Left colon (tissue), 2 donors: ENCODE measurements at regions of chr14 and their contacts with region 1.

Region 1: GRCh38 chr14:34722717-34723545 is 8.5 kb upstream of the CFL2 start:
- DNase-seq: peak in 1 of 2 donors; percentile 26
- ATAC-seq: peak; percentile 49

Region 2: GRCh38 chr14:34671716-34672115 is 51.2 kb before region 1 on chr14:
- intact Hi-C with region 1: loop called (anchors 2 to 10 kb)
- DNase-seq: no peak
- ATAC-seq: no peak

Region 3: DNA sequence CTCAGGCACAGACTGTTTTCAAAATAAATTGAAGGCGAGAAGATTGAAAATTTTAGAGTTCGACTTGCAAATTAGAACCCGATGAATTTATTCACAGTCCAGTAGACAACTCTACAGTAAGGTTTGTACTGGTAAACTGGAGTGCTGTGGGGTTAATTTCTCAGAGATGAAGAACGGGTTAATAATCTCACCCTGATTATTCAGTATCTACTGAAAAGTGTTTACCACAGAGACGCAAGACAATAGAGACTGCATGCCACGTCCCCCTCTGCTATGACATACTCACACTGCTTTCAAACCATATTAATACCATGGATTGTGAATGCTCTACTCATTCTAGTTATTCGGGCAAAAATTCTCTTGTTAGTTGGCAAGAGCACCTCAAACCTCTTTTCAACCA is 44.6 kb before region 1 on chr14:
- intact Hi-C with region 1: loop called (anchors 2 to 10 kb)
- DNase-seq: no peak
- ATAC-seq: no peak

Region 4: DNA sequence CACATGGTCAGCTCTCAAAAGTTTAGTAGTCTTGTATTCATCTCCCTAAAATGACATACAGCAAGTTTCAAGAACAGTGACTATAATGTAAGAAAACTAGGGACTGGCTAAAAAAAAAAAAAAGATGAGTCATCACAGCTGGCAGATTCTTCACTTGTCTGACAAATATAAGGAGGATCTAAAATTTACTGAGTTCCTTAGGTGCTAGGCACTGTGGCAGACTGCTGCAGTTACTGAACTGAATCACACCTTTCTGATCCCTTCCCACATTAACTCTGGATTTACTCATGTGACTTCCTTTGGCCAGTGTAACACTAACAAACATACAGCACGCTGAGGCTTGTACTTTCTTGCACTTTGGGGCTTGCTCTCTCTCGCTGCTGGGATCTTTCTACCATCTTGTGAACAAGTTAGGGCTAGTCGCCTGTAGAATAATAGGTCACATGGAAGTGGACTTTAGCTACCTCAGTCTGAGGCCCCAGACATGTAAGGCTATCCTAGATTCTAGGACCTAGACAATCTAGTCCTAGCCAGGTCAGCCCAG is 120.2 kb after region 1 on chr14:
- intact Hi-C with region 1: no loop called
- DNase-seq: no peak
- ATAC-seq: no peak

Region 5: DNA sequence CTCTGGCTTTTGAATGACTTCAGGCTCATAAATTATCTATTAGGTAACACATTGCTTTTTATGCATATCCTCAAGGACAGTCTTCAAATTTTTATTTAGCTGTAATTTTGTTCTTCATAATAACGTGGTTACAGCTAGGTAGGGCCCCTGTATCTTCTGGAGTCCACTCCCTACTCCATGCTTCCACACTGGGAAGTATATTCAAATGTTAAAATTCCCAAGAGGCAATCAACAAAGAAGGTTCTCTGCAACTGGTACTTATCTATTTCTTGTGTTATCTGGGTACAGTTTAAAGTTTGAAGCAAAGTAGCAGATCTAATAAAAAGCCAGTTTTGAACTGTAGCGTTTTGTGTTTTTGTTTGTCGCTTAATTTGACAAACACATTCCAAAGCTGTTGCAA is 172.3 kb after region 1 on chr14:
- intact Hi-C with region 1: no loop called
- DNase-seq: no peak
- ATAC-seq: no peak

Region 6: DNA sequence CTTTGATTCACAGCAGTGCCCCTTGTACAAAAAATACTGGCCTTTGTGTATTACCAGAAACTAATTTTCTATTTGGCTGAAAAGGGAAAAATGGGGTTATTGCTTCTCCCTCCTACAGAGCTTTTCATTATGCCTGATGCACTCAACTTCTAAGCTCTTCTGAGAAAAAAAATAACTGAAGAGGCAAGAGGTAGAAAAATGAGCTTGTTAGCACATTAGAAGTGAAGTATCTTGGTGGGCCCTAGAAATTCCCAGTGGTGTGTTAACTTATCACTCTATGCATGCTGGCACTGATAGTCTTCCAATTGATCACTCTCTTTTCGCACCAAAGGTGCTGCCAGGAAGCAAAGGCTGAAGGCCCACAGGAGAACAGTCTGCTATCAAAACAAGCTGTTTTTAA is 828.1 kb after region 1 on chr14:
- intact Hi-C with region 1: no loop called
- DNase-seq: no peak
- ATAC-seq: no peak